Heart right ventricle (tissue), 16 donors: ENCODE measurements at regions of chr12 and their contacts with region 1.

Region 1: GRCh38 chr12:12024911-12025682 is 45.6 kb upstream of the BCL2L14 start:
- DNase-seq: no peak
- ATAC-seq: no peak
- H3K4me3 ChIP-seq: no peak overlapping the region
- H3K27ac ChIP-seq: no peak overlapping the region
- H3K4me1 ChIP-seq: peaks cover 0 to 15% (median 0%) of the 10 kb centered on the region in 9 donors
- H3K27me3 ChIP-seq: no peaks in the 10 kb centered on the region
- CTCF ChIP-seq: no peak

Region 2: GRCh38 chr12:11630046-11630706 is 394.9 kb before region 1 on chr12:
- intact Hi-C with region 1: loop called in 1 of 10 experiments (anchors 5 kb)
- DNase-seq: no peak
- ATAC-seq: no peak
- H3K4me3 ChIP-seq: no peak overlapping the region
- H3K27ac ChIP-seq: no peak overlapping the region
- H3K4me1 ChIP-seq: no peaks in the 10 kb centered on the region
- H3K27me3 ChIP-seq: no peaks in the 10 kb centered on the region
- CTCF ChIP-seq: no peak

Region 3: DNA sequence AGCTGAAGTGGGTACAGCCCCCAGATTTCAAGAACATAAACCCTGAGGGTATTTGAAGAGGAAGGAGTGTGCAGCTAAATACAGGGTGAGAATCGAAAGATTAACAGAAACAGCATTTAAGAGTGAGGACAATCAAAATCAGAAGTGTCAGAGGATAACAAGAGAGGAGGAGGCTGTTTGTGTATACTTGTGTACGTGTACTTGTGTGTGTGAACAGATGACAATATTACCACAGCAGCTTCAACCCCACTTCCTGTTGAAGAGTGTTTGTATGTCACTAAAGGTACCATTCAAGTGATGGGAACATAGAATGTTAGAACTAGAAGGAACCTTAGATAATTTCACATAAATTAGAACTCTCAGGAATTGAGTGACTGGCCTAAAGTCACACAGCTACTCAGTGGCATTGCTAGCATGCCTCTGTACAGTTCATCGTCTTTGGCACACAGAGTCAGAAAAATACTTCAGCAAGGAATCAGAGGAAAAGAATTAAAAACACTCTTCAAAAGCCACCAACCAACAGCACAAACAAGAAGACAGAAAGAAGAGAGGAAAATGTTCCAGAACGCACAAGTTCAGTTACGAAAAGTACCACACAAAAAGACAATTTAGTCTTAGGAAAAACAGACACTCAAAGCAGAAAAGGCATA is 118.7 kb before region 1 on chr12:
- intact Hi-C with region 1: loop called in 1 of 10 experiments (anchors 10 kb)
- DNase-seq: no peak
- ATAC-seq: no peak
- H3K4me3 ChIP-seq: no peak overlapping the region
- H3K27ac ChIP-seq: no peak overlapping the region
- H3K4me1 ChIP-seq: no peaks in the 10 kb centered on the region
- H3K27me3 ChIP-seq: no peaks in the 10 kb centered on the region
- CTCF ChIP-seq: no peak